Activated CD8-positive, alpha-beta T cell treated with anti-CD3 and anti-CD28 coated beads for 36 hours (primary cell): ENCODE measurements at regions of chr3 and their contacts with region 1.

Region 1: GRCh38 chr3:30644593-30645012 is 38.2 kb downstream of the TGFBR2 start:
- DNase-seq: peak; percentile 81
- ATAC-seq: peak; percentile 45
- H3K4me3 Mint-ChIP-seq: peak overlapping the region; percentile 51
- H3K27ac Mint-ChIP-seq: peak overlapping the region; percentile 98
- H3K4me1 Mint-ChIP-seq: peaks cover 95% of the 10 kb centered on the region
- H3K27me3 Mint-ChIP-seq: no peaks in the 10 kb centered on the region
- CTCF ChIP-seq: no peak

Region 2: DNA sequence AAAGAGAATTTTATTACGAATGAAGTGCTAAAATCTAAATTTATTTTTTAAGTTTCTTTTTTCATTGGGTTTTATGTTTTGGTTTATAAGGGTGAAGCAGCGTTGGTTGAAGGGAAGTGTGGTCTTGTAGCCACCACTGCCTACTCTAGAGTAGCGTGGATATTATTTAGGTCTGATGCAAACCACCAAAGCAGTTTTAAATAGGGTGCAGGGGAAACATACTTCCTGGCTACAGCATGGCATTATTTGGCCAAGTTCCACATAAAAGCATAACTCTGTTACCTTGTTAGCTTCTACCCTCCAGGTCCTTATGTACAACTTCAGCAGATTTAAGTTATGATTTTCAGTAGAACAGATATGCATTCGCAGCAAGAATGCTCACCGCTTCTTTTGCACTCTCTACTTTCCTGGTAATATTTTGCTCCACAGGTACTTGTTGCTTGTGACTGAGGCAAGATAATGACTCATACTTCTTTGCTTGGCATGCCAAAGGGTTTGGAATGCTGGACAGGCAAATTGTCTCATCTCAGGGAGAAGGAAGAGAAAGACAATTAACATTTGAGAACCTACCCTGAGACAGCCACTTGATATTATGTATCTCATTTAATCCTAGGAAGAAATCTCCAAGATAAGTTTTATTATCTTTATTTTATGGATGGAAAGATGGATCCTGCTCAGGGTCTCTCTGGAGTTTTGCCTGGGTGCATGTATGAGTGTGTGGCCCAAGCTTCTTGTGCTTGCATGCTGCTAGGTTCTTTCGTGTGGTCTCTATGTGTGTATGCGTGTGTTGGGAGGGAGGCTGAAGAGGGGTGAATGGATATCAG is 32.8 kb before region 1 on chr3:
- CTCF ChIA-PET with region 1: interaction called, 4 read pairs
- POLR2A ChIA-PET with region 1: interaction called, 86 read pairs
- intact Hi-C with region 1: loop called (anchors 5 kb)
- DNase-seq: no peak
- ATAC-seq: peak; percentile 10
- H3K4me3 Mint-ChIP-seq: peak overlapping the region; percentile 88
- H3K27ac Mint-ChIP-seq: peak overlapping the region; percentile 96
- H3K4me1 Mint-ChIP-seq: peaks cover 55% of the 10 kb centered on the region
- H3K27me3 Mint-ChIP-seq: no peaks in the 10 kb centered on the region
- CTCF ChIP-seq: no peak

Region 3: DNA sequence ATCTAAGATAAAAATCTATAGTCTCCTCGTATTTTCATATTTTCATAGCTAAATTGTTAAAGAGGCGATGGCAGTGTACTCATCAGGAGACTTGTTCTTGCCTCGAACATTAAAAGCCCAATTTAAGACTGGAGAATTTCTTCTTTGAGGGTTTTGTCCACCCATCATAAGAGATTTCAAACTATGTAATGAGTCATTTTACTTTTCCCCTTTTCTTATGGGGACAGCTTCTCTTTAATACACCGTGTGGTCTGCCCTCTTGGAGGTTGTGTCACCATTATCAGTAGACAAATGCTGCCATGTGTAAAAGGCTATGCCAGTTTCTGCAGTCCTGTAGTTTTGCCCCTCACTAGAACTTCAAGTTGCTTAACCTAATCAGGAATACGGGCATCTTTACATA is 21.3 kb before region 1 on chr3:
- CTCF ChIA-PET with region 1: interaction called, 6 read pairs
- POLR2A ChIA-PET with region 1: interaction called, 86 read pairs
- intact Hi-C with region 1: loop called (anchors 2 kb)
- DNase-seq: peak; percentile 42
- ATAC-seq: peak; percentile 31
- H3K4me3 Mint-ChIP-seq: peak overlapping the region; percentile 63
- H3K27ac Mint-ChIP-seq: peak overlapping the region; percentile 98
- H3K4me1 Mint-ChIP-seq: peaks cover 86% of the 10 kb centered on the region
- H3K27me3 Mint-ChIP-seq: no peaks in the 10 kb centered on the region
- CTCF ChIP-seq: no peak

Region 4: GRCh38 chr3:30628901-30629590 is 15.6 kb before region 1 on chr3:
- CTCF ChIA-PET with region 1: interaction called, 6 read pairs
- POLR2A ChIA-PET with region 1: interaction called, 30 read pairs
- intact Hi-C with region 1: no loop called
- DNase-seq: no peak
- ATAC-seq: peak; percentile 12
- H3K4me3 Mint-ChIP-seq: peak overlapping the region; percentile 34
- H3K27ac Mint-ChIP-seq: peak overlapping the region; percentile 98
- H3K4me1 Mint-ChIP-seq: peaks cover 89% of the 10 kb centered on the region
- H3K27me3 Mint-ChIP-seq: no peaks in the 10 kb centered on the region
- CTCF ChIP-seq: no peak

Region 5: DNA sequence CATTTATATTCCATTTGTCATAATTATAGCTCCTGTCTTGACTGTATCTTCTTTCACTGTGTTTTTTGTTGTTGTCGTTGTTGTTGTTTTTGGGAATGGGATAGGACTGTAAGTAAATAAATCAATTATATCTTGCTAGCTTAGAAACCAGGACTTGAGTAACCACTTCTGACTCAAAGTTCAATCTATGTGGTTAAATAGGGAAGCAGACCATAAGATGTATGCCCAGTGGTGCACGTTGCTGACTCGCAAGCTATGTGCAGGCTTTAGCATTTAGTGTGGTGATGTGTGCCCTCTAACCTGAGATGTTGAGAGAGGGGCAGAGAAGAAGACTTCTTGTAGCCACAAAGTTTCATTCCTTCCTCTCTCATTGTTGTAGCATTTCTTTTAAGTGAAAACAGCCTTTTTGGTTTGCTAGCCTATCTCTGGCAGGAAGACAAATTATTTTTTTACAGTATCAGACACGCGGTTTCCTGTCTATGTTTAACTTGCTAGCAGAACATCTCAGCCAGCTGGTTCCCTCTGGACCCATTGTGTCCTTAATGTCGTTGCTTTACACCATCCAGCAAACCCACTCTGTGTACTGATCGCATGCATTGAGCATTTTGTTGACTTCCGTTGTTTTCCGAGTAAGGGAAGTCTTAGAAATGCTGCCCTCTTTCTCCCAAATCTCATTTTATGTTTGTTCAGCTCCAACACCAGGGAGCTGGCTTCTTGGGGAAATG is 13.9 kb after region 1 on chr3:
- CTCF ChIA-PET with region 1: interaction called, 26 read pairs
- POLR2A ChIA-PET with region 1: interaction called, 173 read pairs
- intact Hi-C with region 1: loop called (anchors 2 kb)
- DNase-seq: peak; percentile 80
- ATAC-seq: peak; percentile 74
- H3K4me3 Mint-ChIP-seq: peak overlapping the region; percentile 65
- H3K27ac Mint-ChIP-seq: peak overlapping the region; percentile 98
- H3K4me1 Mint-ChIP-seq: peaks cover 100% of the 10 kb centered on the region
- H3K27me3 Mint-ChIP-seq: no peaks in the 10 kb centered on the region
- CTCF ChIP-seq: no peak